Common myeloid progenitor, CD34-positive (primary cell): ENCODE measurements at regions of chr16 and their contacts with region 1.

Region 1: GRCh38 chr16:75064403-75065148 is 52.0 kb downstream of the LDHD start:
- DNase-seq: peak; percentile 83 to 89 (median 88)
- H3K4me3 ChIP-seq: peak overlapping the region in 6 of 7 experiments; percentile 9 to 66 (median 50)
- H3K27ac ChIP-seq: peak overlapping the region; percentile 62 to 84
- H3K4me1 ChIP-seq: peaks cover 39 to 99% (median 96%) of the 10 kb centered on the region in 4 experiments
- H3K27me3 ChIP-seq: no peaks in the 10 kb centered on the region

Region 2: GRCh38 chr16:74852500-74852875 is 212.1 kb before region 1 on chr16:
- CTCF ChIA-PET with region 1: no interaction called
- POLR2A ChIA-PET with region 1: no interaction called
- DNase-seq: peak in 1 of 3 donors; percentile 2
- H3K4me3 ChIP-seq: no peak overlapping the region
- H3K27ac ChIP-seq: no peak overlapping the region
- H3K4me1 ChIP-seq: no peaks in the 10 kb centered on the region
- H3K27me3 ChIP-seq: no peaks in the 10 kb centered on the region

Region 3: GRCh38 chr16:74973153-74973703 is 91.3 kb before region 1 on chr16:
- CTCF ChIA-PET with region 1: no interaction called
- POLR2A ChIA-PET with region 1: no interaction called
- DNase-seq: peak in 1 of 3 donors; percentile 23
- H3K4me3 ChIP-seq: no peak overlapping the region
- H3K27ac ChIP-seq: no peak overlapping the region
- H3K4me1 ChIP-seq: no peaks in the 10 kb centered on the region
- H3K27me3 ChIP-seq: no peaks in the 10 kb centered on the region

Region 4: GRCh38 chr16:74998481-74999218 is 65.9 kb before region 1 on chr16 and contains the start of gene ZNRF1:
- CTCF ChIA-PET with region 1: interaction called, 13 read pairs
- POLR2A ChIA-PET with region 1: interaction called, 4 read pairs
- DNase-seq: peak; percentile 91 to 95 (median 94)
- H3K4me3 ChIP-seq: peak within 1 kb of the TSS; percentile 86 to 100 (median 93)
- H3K27ac ChIP-seq: peak within 1 kb of the TSS; percentile 57 to 85
- H3K4me1 ChIP-seq: peaks cover 19 to 53% (median 32%) of the 10 kb centered on the region in 4 experiments
- H3K27me3 ChIP-seq: no peaks in the 10 kb centered on the region

Region 5: DNA sequence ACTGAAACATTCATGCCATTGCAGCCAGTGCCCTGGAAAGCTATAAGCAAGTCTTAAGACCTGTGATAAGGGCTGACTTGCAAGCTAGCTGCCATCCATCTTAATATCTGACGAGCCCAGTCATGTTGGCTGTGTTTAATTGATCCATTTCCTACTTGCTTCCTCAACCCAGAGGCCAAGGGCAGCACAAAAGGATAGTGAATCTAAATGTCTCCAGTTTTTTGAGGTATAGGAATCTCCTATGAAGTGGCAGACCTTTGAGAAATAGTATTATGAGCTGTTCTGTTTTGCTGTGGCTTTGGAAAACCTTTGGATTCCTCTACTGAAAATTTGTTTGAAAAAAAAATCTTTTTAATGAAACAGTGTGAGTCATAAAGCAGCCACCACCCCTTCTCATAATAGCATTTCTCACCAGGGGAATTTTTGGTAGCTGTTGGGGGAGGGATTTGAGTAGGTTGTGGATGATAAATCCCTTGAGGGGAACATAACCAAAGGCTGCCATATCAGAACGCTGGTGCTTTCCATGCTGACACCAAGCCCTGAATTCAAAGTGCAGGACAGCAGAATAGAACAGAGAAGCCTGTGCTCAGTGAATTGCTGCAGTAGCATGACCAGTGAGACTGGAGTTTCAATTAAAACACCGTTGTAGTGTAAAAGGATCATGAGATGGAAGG is 52.8 kb before region 1 on chr16:
- CTCF ChIA-PET with region 1: interaction called, 11 read pairs
- POLR2A ChIA-PET with region 1: no interaction called
- DNase-seq: peak; percentile 63 to 92 (median 92)
- H3K4me3 ChIP-seq: peak overlapping the region in 3 of 7 experiments; percentile 6 to 17 (median 11)
- H3K27ac ChIP-seq: peak overlapping the region; percentile 46 to 71
- H3K4me1 ChIP-seq: peaks cover 16 to 49% (median 40%) of the 10 kb centered on the region in 4 experiments
- H3K27me3 ChIP-seq: no peaks in the 10 kb centered on the region

Region 6: GRCh38 chr16:75043175-75043895 is 21.2 kb before region 1 on chr16:
- CTCF ChIA-PET with region 1: interaction called, 42 read pairs
- POLR2A ChIA-PET with region 1: interaction called, 31 read pairs
- DNase-seq: peak; percentile 96 to 100 (median 98)
- H3K4me3 ChIP-seq: peak overlapping the region in 3 of 7 experiments; percentile 49 to 63 (median 56)
- H3K27ac ChIP-seq: peak overlapping the region; percentile 90 to 95
- H3K4me1 ChIP-seq: peaks cover 26 to 85% (median 73%) of the 10 kb centered on the region in 4 experiments
- H3K27me3 ChIP-seq: no peaks in the 10 kb centered on the region

Region 7: DNA sequence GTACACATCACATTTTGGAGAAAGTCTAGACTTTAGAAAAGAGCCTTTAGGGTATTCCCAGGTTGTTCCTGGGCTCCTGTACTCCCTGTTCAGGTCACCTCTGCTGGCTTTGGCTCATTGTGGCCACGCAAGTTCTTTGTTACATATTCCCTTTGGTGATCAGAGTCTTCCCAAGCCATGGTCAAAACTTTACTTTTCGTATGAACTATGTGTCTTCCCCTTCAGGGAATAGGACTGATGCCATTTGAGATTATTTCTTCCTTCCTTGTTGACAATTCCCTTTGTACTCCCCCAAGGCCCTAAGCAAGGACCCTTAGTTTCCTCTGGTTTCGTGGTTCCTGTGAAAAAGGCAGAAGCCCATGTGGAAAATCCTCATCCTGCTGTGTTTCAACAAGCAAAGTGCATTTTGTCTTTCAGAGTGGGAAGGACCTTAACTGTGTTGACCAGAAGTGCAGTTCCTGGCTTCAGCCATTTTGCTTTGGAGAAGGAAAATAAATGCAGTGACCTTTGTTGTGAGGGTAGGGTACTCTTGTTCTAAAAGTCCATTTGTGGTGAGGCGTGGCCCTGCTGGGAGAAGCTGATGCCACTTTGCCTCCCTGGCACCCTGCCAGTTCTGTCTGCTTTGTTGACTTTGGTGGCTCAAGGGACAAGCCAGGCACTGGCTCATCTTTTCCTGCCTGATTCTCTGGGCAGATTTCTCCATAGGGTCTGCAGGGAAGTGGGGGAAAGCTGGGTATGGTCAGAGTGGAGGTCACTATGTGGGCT is 10.6 kb before region 1 on chr16:
- CTCF ChIA-PET with region 1: interaction called, 29 read pairs
- POLR2A ChIA-PET with region 1: no interaction called
- DNase-seq: peak in 2 of 3 donors; percentile 58 to 61
- H3K4me3 ChIP-seq: peak overlapping the region in 1 of 7 experiments; percentile 16
- H3K27ac ChIP-seq: peak overlapping the region; percentile 22 to 60
- H3K4me1 ChIP-seq: peaks cover 26 to 79% (median 57%) of the 10 kb centered on the region in 4 experiments
- H3K27me3 ChIP-seq: no peaks in the 10 kb centered on the region

Region 8: GRCh38 chr16:75074920-75075687 is 10.5 kb after region 1 on chr16:
- CTCF ChIA-PET with region 1: interaction called, 43 read pairs
- POLR2A ChIA-PET with region 1: interaction called, 38 read pairs
- DNase-seq: peak; percentile 97 to 100 (median 99)
- H3K4me3 ChIP-seq: peak overlapping the region in 4 of 7 experiments; percentile 2 to 48 (median 22)
- H3K27ac ChIP-seq: peak overlapping the region; percentile 61 to 80
- H3K4me1 ChIP-seq: peaks cover 20 to 97% (median 89%) of the 10 kb centered on the region in 4 experiments
- H3K27me3 ChIP-seq: no peaks in the 10 kb centered on the region

Region 9: DNA sequence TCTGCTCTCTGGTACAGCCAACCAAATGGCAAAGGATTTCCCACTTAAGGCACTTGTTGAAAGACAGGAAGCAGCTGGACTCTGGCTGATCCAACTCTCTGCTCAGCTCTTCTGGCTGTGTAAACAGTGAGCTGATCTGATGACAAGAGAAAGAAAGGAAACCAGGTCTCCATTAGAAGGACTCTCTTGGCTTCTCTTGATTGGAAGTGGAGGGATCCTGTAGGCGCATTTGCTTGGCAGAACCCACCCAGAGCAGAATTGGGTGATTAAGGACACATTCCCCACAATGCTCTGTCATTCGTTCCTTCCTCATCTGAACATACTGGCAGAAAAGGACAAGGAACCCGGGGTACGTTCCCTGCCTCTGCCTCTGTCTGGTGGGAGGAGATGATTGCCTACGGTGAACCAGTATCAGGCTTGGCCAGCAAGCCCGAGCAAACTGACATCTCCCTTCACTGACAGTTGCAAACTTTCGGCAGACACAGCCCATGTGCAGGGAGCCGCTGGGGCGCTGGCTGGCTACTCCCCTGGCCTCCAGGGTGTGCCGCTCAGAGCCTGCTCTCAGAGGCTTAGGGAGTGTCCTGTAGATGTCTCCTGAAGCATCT is 22.9 kb after region 1 on chr16:
- CTCF ChIA-PET with region 1: interaction called, 23 read pairs
- POLR2A ChIA-PET with region 1: interaction called, 5 read pairs
- DNase-seq: peak in 2 of 3 donors; percentile 79 to 87
- H3K4me3 ChIP-seq: peak overlapping the region in 4 of 7 experiments; percentile 17 to 58 (median 34)
- H3K27ac ChIP-seq: peak overlapping the region; percentile 11 to 73
- H3K4me1 ChIP-seq: peaks cover 16 to 91% (median 66%) of the 10 kb centered on the region in 4 experiments
- H3K27me3 ChIP-seq: no peaks in the 10 kb centered on the region

Region 10: GRCh38 chr16:75198135-75198600 is 133.6 kb after region 1 on chr16:
- CTCF ChIA-PET with region 1: no interaction called
- POLR2A ChIA-PET with region 1: no interaction called
- DNase-seq: peak in 1 of 3 donors; percentile 11
- H3K4me3 ChIP-seq: no peak overlapping the region
- H3K27ac ChIP-seq: no peak overlapping the region
- H3K4me1 ChIP-seq: peaks cover 0 to 10% (median 4%) of the 10 kb centered on the region in 4 experiments
- H3K27me3 ChIP-seq: peaks cover 0 to 47% (median 16%) of the 10 kb centered on the region in 5 experiments